Left cardiac atrium (tissue), 4 donors: ENCODE measurements at regions of chr14 and their contacts with region 1.

Region 1: GRCh38 chr14:67285876-67286452 is 44.7 kb downstream of the PALS1 start:
- DNase-seq: no peak
- ATAC-seq: no peak

Region 2: GRCh38 chr14:66662374-66662773 is 623.6 kb before region 1 on chr14:
- intact Hi-C with region 1: no loop called
- DNase-seq: no peak
- ATAC-seq: no peak

Region 3: GRCh38 chr14:67166450-67166853 is 119.5 kb before region 1 on chr14:
- intact Hi-C with region 1: loop called (anchors 1 to 5 kb)
- DNase-seq: no peak
- ATAC-seq: no peak